ENCODE measurements at regions of chr22 and their contacts with region 1.

Region 1: GRCh38 chr22:35439365-35439717 is 39.4 kb downstream of the MCM5 start:
- DNase-seq: no peak
- ATAC-seq: no peak
- H3K4me3 ChIP-seq: no peak overlapping the region
- H3K4me3 Mint-ChIP-seq: no peak overlapping the region
- H3K27ac ChIP-seq: no peak overlapping the region
- H3K27ac Mint-ChIP-seq: no peak overlapping the region
- H3K4me1 ChIP-seq: no peaks in the 10 kb centered on the region
- H3K4me1 Mint-ChIP-seq: no peaks in the 10 kb centered on the region
- H3K27me3 ChIP-seq: no peaks in the 10 kb centered on the region
- H3K27me3 Mint-ChIP-seq: no peaks in the 10 kb centered on the region
- CTCF ChIP-seq: no peak

Region 2: GRCh38 chr22:35376728-35377472 is 62.4 kb before region 1 on chr22:
- CTCF ChIA-PET with region 1: no interaction called
- POLR2A ChIA-PET with region 1: no interaction called
- intact Hi-C with region 1: no loop called
- DNase-seq: peak; percentile 87
- ATAC-seq: peak; percentile 77
- H3K4me3 ChIP-seq: peak overlapping the region in 1 of 5 experiments; percentile 38
- H3K4me3 Mint-ChIP-seq: peak overlapping the region; percentile 79
- H3K27ac ChIP-seq: no peak overlapping the region
- H3K27ac Mint-ChIP-seq: peak overlapping the region; percentile 93
- H3K4me1 ChIP-seq: peaks cover 35 to 46% of the 10 kb centered on the region in 2 donors
- H3K4me1 Mint-ChIP-seq: peaks cover 50% of the 10 kb centered on the region
- H3K27me3 ChIP-seq: peaks cover 0 to 8% (median 0%) of the 10 kb centered on the region in 4 experiments
- H3K27me3 Mint-ChIP-seq: no peaks in the 10 kb centered on the region
- CTCF ChIP-seq: no peak

Region 3: DNA sequence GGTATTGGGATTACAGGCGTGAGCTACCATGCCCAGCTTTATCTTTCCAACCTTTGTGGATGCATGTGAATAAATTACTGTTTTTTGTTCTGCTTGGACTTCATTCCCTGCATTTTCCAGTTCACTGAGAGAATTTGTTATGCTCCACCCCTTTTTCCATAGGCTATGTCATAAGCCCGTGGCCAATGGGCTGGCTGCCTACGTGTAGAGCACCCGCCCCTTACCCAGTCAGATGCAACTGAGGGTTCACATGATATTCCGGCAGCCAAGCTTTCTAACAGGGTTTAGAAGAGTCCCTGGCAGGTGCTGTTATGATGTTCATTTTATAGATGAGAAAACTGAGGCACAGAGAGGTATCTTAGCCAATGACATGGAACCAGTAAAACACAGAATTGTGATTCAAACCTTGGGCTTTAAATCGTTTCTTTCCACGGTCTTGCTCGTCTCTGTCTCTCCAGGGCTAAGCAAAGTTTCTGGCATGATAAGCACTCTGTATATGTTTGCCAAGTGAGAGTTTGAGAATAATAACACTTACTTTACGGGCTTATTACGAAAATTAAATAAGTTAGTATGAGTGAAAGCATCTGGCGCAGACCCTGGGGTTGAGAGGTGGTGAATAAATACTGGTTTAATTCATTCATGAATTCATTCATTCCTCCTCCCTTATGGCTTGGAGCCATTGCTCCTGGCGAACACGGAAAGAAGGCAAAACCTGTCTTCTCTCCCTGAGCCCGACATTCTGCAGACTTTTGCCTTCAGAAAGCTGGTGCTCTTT is 58.9 kb after region 1 on chr22:
- CTCF ChIA-PET with region 1: no interaction called
- POLR2A ChIA-PET with region 1: no interaction called
- intact Hi-C with region 1: loop called (anchors 2 kb)
- DNase-seq: no peak
- ATAC-seq: no peak
- H3K4me3 ChIP-seq: no peak overlapping the region
- H3K4me3 Mint-ChIP-seq: no peak overlapping the region
- H3K27ac ChIP-seq: no peak overlapping the region
- H3K27ac Mint-ChIP-seq: no peak overlapping the region
- H3K4me1 ChIP-seq: no peaks in the 10 kb centered on the region
- H3K4me1 Mint-ChIP-seq: no peaks in the 10 kb centered on the region
- H3K27me3 ChIP-seq: peaks cover 0 to 14% (median 4%) of the 10 kb centered on the region in 4 experiments
- H3K27me3 Mint-ChIP-seq: peaks cover 56% of the 10 kb centered on the region
- CTCF ChIP-seq: no peak

Measured in B cell (primary cell).